ENCODE measurements at regions of chr13 and their contacts with region 1.

Region 1: GRCh38 chr13:42497798-42498197 is 76.2 kb upstream of the TNFSF11 start:
- DNase-seq: no peak
- H3K4me3 Mint-ChIP-seq: no peak overlapping the region
- H3K27ac Mint-ChIP-seq: peak overlapping the region; percentile 83
- H3K4me1 Mint-ChIP-seq: peaks cover 65% of the 10 kb centered on the region
- H3K27me3 Mint-ChIP-seq: no peaks in the 10 kb centered on the region

Region 2: GRCh38 chr13:42271337-42272114 is 226.3 kb before region 1 on chr13:
- intact Hi-C with region 1: loop called (anchors 1 kb)
- DNase-seq: peak; percentile 95
- H3K4me3 Mint-ChIP-seq: peak overlapping the region; percentile 78
- H3K27ac Mint-ChIP-seq: peak overlapping the region; percentile 91
- H3K4me1 Mint-ChIP-seq: peaks cover 44% of the 10 kb centered on the region
- H3K27me3 Mint-ChIP-seq: no peaks in the 10 kb centered on the region

Region 3: GRCh38 chr13:42354241-42355091 is 143.3 kb before region 1 on chr13:
- intact Hi-C with region 1: loop called (anchors 1 kb)
- DNase-seq: no peak
- H3K4me3 Mint-ChIP-seq: peak overlapping the region; percentile 77
- H3K27ac Mint-ChIP-seq: peak overlapping the region; percentile 100
- H3K4me1 Mint-ChIP-seq: peaks cover 64% of the 10 kb centered on the region
- H3K27me3 Mint-ChIP-seq: no peaks in the 10 kb centered on the region

Region 4: DNA sequence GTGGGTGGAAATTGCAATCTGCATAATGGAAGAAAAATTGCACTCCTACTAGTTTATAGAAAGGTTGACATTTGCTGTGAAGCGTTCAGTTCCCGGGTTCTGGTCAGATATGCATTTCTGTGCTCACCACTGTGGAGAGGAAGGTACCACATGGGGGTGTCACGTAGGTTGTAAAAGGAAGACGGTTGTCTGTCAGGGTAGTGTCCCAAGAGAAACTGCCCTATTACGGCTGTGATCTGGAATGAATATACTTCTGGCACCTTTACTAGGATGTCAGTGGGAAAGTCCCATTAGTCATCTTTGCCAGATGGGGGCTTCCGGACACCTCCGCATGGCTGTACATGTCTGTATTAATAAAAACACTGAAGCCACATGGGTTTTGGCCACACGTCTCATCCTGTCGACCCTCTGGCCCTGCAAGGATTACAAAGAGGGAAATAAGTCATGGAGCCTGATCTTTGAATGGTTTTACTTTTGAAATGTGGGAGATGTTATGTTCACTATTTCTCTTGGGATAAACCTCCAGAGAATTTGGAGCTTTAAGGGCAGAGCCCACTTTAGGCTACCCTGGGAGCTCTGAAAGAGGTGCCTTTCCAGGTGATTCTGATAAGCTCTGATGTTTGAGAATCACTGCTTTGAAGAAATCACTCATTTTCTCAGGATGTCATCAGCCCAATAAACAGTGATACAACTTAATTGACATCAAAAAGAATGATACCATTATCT is 92.0 kb before region 1 on chr13:
- intact Hi-C with region 1: loop called (anchors 1 kb)
- DNase-seq: no peak
- H3K4me3 Mint-ChIP-seq: peak overlapping the region; percentile 62
- H3K27ac Mint-ChIP-seq: peak overlapping the region; percentile 96
- H3K4me1 Mint-ChIP-seq: peaks cover 68% of the 10 kb centered on the region
- H3K27me3 Mint-ChIP-seq: no peaks in the 10 kb centered on the region

Region 5: GRCh38 chr13:42574435-42575311 is 76.9 kb after region 1 on chr13:
- intact Hi-C with region 1: loop called (anchors 1 kb)
- DNase-seq: peak; percentile 30
- H3K4me3 Mint-ChIP-seq: peak overlapping the region; percentile 74
- H3K27ac Mint-ChIP-seq: peak overlapping the region; percentile 75
- H3K4me1 Mint-ChIP-seq: peaks cover 43% of the 10 kb centered on the region
- H3K27me3 Mint-ChIP-seq: peaks cover 5% of the 10 kb centered on the region

Region 6: DNA sequence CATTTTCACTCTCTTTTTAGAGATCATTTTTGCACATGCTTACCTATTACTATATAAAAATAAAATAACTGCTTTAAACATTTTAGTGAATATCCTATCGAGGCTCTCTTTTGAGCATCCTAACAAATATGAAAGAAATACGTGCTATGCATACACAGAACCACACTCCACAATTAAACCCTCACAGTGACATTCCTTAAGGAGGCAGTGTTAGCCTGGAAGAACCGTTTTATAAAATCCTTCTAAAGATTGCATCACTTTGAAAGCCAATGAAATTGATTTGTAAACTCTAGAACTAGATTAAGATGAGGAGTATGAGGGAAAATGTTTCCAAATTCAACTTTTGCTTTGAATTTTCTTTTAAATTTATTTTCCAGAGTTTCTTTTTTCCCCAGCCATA is 1300.1 kb after region 1 on chr13:
- intact Hi-C with region 1: loop called (anchors 5 kb)
- DNase-seq: no peak
- H3K4me3 Mint-ChIP-seq: no peak overlapping the region
- H3K27ac Mint-ChIP-seq: no peak overlapping the region
- H3K4me1 Mint-ChIP-seq: peaks cover 12% of the 10 kb centered on the region
- H3K27me3 Mint-ChIP-seq: peaks cover 43% of the 10 kb centered on the region